GM12878 (cell line): ENCODE measurements at regions of chr13 and their contacts with region 1.

Region 1: GRCh38 chr13:77715233-77715891 is 17.9 kb downstream of the SLAIN1 start:
- DNase-seq: no peak
- ATAC-seq: peak; percentile 65
- H3K4me3 ChIP-seq: no peak overlapping the region
- H3K27ac ChIP-seq: peak overlapping the region; percentile 17
- H3K4me1 ChIP-seq: peaks cover 12% of the 10 kb centered on the region
- H3K27me3 ChIP-seq: no peaks in the 10 kb centered on the region
- CTCF ChIP-seq: no peak
- EP300 ChIP-seq: no peak; a peak in 1 of 4 replicates
- POLR2A ChIP-seq: no peak
- RAD21 ChIP-seq: no peak

Region 2: DNA sequence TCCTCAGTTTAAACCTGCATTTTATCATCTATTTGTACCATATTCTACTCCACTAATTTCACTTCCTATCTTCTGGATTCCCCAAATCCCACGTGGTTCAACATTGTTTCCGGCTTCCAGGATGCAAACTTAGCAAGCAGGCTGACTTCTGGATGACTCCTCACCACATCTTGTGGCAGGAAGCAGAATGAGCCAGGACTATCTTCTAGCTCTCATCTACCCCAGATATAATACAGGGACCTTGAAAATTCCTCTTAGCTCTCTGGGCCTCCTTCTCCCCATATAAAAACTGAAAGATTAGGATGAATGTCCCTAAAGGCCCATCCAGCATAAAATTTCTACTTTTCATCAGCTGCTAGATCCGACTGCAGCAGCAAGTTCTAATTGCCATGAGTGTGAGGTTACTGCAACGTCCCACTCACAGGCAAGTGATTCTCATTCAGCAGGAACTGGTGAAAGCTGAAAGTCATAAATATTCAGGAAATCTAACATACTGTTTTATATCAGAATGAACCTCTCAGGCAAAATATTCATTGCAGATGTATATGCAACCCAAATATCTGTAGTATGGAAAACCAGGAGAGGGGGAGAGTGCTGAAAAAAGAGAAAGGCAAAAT is 922.5 kb before region 1 on chr13:
- CTCF ChIA-PET with region 1: no interaction called
- POLR2A ChIA-PET with region 1: no interaction called
- RAD21 ChIA-PET with region 1: no interaction called
- SMC1A ChIA-PET with region 1: no interaction called
- in situ Hi-C with region 1: no loop called
- intact Hi-C with region 1: no loop called
- DNase-seq: no peak
- ATAC-seq: no peak
- H3K4me3 ChIP-seq: no peak overlapping the region
- H3K27ac ChIP-seq: no peak overlapping the region
- H3K4me1 ChIP-seq: no peaks in the 10 kb centered on the region
- H3K27me3 ChIP-seq: no peaks in the 10 kb centered on the region
- CTCF ChIP-seq: no peak
- EP300 ChIP-seq: no peak
- POLR2A ChIP-seq: no peak
- RAD21 ChIP-seq: no peak

Region 3: GRCh38 chr13:77516342-77516789 is 199.0 kb before region 1 on chr13:
- CTCF ChIA-PET with region 1: no interaction called
- POLR2A ChIA-PET with region 1: no interaction called
- RAD21 ChIA-PET with region 1: no interaction called
- SMC1A ChIA-PET with region 1: no interaction called
- in situ Hi-C with region 1: no loop called
- intact Hi-C with region 1: no loop called
- DNase-seq: no peak
- ATAC-seq: peak; percentile 57
- H3K4me3 ChIP-seq: no peak overlapping the region
- H3K27ac ChIP-seq: no peak overlapping the region
- H3K4me1 ChIP-seq: peaks cover 14% of the 10 kb centered on the region; the same call in 1 of the 2 replicates
- H3K27me3 ChIP-seq: no peaks in the 10 kb centered on the region
- CTCF ChIP-seq: no peak
- EP300 ChIP-seq: no peak
- POLR2A ChIP-seq: no peak
- RAD21 ChIP-seq: no peak

Region 4: GRCh38 chr13:77533875-77534788 is 181.2 kb before region 1 on chr13:
- CTCF ChIA-PET with region 1: no interaction called
- POLR2A ChIA-PET with region 1: no interaction called
- RAD21 ChIA-PET with region 1: no interaction called
- SMC1A ChIA-PET with region 1: no interaction called
- in situ Hi-C with region 1: no loop called
- intact Hi-C with region 1: no loop called
- DNase-seq: no peak
- ATAC-seq: peak; percentile 54
- H3K4me3 ChIP-seq: no peak overlapping the region
- H3K27ac ChIP-seq: no peak overlapping the region
- H3K4me1 ChIP-seq: 0 out of 2 replicates have a peak, but pooled peaks cover 2% of the 10 kb centered on the region
- H3K27me3 ChIP-seq: peaks cover 0 to 9% of the 10 kb centered on the region in 2 experiments; a peak in 1 of 4 replicates
- CTCF ChIP-seq: no peak
- EP300 ChIP-seq: no peak
- POLR2A ChIP-seq: no peak
- RAD21 ChIP-seq: no peak

Region 5: DNA sequence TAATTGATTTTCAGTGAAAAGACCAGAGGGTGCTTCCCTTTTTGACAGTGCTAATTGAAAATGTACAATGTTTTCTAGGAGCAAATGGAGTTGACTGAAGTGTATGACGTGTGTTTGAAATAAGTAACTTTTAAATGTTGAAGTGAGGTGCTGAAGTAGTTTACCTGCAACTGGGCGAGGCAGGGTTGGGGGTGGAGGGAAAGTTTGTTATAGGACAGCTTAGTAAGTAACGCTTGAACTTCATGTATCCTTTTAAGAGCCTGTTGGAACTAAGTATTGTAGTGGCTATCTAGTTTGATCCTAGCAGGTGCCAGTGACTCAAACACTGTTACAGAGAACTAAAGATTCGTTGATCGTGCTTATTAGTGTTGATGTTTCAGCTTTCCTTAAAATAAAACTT is 12.0 kb before region 1 on chr13:
- CTCF ChIA-PET with region 1: interaction called, 8 read pairs
- POLR2A ChIA-PET with region 1: interaction called, 9 read pairs
- RAD21 ChIA-PET with region 1: interaction called, 9 read pairs
- SMC1A ChIA-PET with region 1: interaction called, 61 read pairs
- in situ Hi-C with region 1: no loop called
- intact Hi-C with region 1: loop called (anchors 1 kb)
- DNase-seq: no peak
- ATAC-seq: no peak
- H3K4me3 ChIP-seq: no peak overlapping the region
- H3K27ac ChIP-seq: no peak overlapping the region
- H3K4me1 ChIP-seq: no peaks in the 10 kb centered on the region
- H3K27me3 ChIP-seq: no peaks in the 10 kb centered on the region
- CTCF ChIP-seq: no peak
- EP300 ChIP-seq: no peak
- POLR2A ChIP-seq: no peak
- RAD21 ChIP-seq: no peak

Region 6: DNA sequence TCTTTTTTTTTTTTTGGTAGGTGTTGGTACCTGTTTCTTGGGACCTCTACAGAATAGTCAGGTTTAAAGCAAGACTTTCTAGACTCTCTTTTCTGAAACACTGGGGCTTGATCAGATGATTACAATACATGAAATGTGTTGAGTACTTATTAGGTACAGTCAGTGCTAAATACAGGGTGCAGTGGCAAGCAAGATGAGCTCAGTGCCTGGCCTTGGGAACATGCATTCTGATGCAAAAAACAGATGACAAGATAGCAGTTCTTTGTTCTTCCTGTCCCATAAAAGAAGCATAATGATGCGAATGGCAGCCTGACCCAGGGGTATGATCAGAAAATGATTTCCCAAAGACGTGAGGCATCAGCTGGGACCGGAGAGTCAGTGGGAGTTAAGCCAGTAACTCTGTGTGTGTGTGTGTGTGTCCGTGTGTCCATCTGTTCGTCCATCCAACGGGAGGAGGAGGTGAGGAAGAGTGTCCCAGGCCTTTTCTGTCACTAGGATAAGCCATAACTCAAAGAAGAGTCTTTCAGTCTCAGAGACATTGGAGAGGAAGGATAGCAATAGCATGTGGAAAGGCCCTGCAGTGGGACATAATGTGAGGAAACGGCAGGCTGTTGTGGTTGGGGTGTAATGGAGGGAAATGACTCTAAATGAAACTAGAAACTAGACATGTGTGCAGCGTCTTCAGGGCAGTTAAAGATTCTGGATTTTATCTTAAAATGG is 14.3 kb after region 1 on chr13:
- CTCF ChIA-PET with region 1: interaction called, 7 read pairs
- POLR2A ChIA-PET with region 1: interaction called, 15 read pairs
- RAD21 ChIA-PET with region 1: interaction called, 25 read pairs
- SMC1A ChIA-PET with region 1: interaction called, 26 read pairs
- in situ Hi-C with region 1: no loop called
- intact Hi-C with region 1: no loop called
- DNase-seq: peak; percentile 64
- ATAC-seq: peak; percentile 97
- H3K4me3 ChIP-seq: peak overlapping the region; percentile 12; the same call in 1 of the 2 replicates
- H3K27ac ChIP-seq: peak overlapping the region; percentile 56
- H3K4me1 ChIP-seq: peaks cover 18% of the 10 kb centered on the region
- H3K27me3 ChIP-seq: no peaks in the 10 kb centered on the region
- CTCF ChIP-seq: no peak
- EP300 ChIP-seq: peak; percentile 78 to 89
- POLR2A ChIP-seq: no peak
- RAD21 ChIP-seq: peak; percentile 7; the same call in 1 of the 2 replicates